PC-3 (cell line): ENCODE measurements at regions of chr21 and their contacts with region 1.

Region 1: GRCh38 chr21:27564684-27565301 is 597.9 kb upstream of the ADAMTS5 start:
- DNase-seq: peak; percentile 52
- ATAC-seq: peak; percentile 99
- H3K4me3 ChIP-seq: no peak overlapping the region
- H3K27ac ChIP-seq: no peak overlapping the region
- H3K4me1 ChIP-seq: peaks cover 1% of the 10 kb centered on the region
- H3K27me3 ChIP-seq: no peaks in the 10 kb centered on the region
- CTCF ChIP-seq: peak; percentile 80

Region 2: DNA sequence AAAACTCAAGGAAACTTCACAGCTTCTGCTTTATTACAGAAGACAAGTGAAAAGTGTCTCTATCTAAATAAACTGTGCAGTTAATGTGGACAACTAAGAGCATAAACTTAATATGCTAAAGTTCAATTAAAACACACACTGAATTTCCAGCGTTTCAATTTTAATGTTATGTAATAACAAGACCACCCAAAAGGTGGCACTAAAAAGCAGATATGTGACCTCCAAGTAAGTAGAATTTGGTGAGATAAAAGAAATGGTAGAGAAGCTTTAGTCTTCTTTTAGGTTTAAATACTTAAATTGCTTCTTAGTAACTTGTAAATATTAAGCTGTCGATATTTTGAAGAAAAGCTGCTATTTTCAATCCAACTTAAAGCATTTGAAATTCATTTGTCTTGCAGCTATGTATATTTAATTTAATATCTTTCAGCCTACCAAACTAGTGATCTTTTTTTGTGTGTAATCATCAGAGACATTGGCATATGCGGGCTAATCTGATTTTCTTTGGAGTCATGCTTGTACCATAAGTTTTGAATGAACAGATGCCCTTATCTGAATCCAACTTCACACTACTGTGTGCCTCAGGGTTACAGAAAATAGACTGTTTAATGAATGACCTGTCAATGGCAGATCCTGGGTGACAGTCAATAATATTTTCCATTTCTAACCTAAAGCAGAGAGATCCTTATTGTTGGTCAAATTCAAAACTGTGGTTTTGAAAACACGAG is 683.1 kb before region 1 on chr21:
- CTCF ChIA-PET with region 1: interaction called, 9 read pairs
- POLR2A ChIA-PET with region 1: no interaction called
- intact Hi-C with region 1: loop called (anchors 1 kb)
- DNase-seq: peak; percentile 39
- ATAC-seq: no peak; the same call in 1 of the 2 replicates
- H3K4me3 ChIP-seq: no peak overlapping the region
- H3K27ac ChIP-seq: no peak overlapping the region
- H3K4me1 ChIP-seq: no peaks in the 10 kb centered on the region
- H3K27me3 ChIP-seq: no peaks in the 10 kb centered on the region
- CTCF ChIP-seq: peak; percentile 60

Region 3: GRCh38 chr21:27213303-27213702 is 351.5 kb before region 1 on chr21:
- CTCF ChIA-PET with region 1: interaction called, 3 read pairs
- POLR2A ChIA-PET with region 1: no interaction called
- intact Hi-C with region 1: loop called (anchors 10 kb)
- DNase-seq: peak; percentile 9
- ATAC-seq: no peak
- H3K4me3 ChIP-seq: no peak overlapping the region
- H3K27ac ChIP-seq: no peak overlapping the region
- H3K4me1 ChIP-seq: no peaks in the 10 kb centered on the region
- H3K27me3 ChIP-seq: no peaks in the 10 kb centered on the region
- CTCF ChIP-seq: peak; percentile 38

Region 4: DNA sequence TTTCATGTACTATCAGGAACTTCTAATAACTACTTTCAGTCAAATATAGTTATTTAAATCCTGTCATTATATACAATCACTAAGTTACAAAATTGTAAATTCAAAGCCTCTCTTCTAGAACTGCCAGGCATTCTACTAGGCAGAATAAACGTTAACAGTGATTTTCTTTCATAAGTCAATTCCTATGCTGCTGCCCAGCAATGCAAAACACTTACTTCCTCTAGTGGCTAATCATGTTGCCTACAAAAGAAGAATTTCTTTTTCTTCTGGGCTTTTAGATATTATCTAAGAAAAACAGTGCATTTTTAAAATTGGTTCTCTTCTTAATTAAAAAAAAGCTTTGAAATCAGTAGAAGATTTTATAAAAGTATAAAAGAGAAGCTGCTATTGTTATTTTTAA is 88.1 kb before region 1 on chr21:
- CTCF ChIA-PET with region 1: no interaction called
- POLR2A ChIA-PET with region 1: no interaction called
- intact Hi-C with region 1: loop called (anchors 5 kb)
- DNase-seq: no peak
- ATAC-seq: no peak
- H3K4me3 ChIP-seq: no peak overlapping the region
- H3K27ac ChIP-seq: no peak overlapping the region
- H3K4me1 ChIP-seq: no peaks in the 10 kb centered on the region
- H3K27me3 ChIP-seq: no peaks in the 10 kb centered on the region
- CTCF ChIP-seq: peak; percentile 34; the same call in 1 of the 2 replicates

Region 5: DNA sequence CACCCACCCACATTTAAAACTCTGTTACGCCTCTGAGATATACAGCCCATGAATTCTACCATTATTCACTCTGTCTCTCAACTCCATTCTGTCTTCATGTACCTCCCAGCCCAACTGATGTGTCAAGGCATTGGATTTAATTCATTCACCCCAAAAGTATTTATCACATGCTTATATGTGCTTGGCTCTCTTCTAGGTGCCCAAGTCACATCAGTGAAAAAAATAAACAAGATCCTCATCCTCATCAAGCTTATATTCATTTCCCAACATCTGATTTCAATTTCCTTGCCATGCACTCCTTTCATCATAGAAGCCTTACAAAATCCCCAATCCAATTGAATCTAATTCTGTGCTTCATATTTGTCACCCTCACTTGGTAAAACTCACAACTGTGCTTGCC is 460.3 kb after region 1 on chr21:
- CTCF ChIA-PET with region 1: no interaction called
- POLR2A ChIA-PET with region 1: no interaction called
- intact Hi-C with region 1: no loop called
- DNase-seq: no peak
- ATAC-seq: no peak
- H3K4me3 ChIP-seq: no peak overlapping the region
- H3K27ac ChIP-seq: no peak overlapping the region
- H3K4me1 ChIP-seq: no peaks in the 10 kb centered on the region
- H3K27me3 ChIP-seq: no peaks in the 10 kb centered on the region
- CTCF ChIP-seq: no peak